ENCODE measurements at regions of chr9 and their contacts with region 1.

Region 1: DNA sequence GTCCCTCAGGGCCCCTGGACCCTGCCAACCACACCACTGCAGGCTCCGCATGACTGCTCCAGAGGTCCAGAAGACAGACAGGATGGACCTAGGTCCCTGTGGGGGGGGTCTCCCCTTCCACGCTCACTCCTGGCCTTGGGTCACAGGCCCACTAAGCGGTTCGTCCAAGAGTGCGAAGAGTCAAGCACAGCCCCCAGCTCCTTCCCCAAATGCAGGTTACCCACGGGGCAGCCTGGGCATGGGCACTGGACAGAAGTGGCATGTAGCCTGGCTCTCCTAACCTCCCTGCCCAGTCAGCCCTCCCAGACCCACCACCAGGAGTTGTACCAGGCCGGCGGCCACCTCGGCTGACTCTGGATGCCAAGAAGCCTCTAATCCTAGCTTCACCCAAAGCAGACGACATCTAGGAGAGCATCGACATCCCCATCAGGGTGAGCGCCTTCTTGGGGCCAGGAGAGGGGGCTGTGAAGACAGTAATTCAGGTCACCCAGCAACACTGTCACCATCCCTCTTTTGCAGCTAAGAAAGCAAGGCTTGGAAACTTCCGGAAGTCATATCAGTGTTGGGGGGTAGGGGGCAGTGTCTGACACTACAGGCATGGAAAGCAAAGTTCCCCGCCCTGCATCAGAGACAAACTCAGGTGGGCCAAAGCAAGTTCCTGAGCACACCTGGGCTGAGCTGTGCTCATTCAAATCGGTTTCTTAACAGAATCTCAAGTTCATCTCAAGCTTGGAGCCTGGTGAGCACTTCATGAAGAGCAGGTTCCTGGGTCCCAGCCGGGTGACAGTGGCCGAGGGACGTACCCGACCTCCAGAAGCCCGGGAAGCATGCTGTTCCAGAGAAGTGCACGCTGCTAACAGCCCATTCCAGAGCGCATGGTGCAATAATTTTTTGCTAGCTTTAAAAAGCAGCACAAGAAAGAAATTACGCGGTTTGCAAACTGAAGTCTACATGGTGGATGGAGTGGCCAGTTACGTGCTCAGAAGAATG is 68.7 kb downstream of the SEMA4D start:
- DNase-seq: peak; percentile 44 to 85 (median 60)
- ATAC-seq: peak; percentile 81
- H3K4me3 ChIP-seq: no peak overlapping the region
- H3K4me3 Mint-ChIP-seq: peak overlapping the region; percentile 63
- H3K27ac ChIP-seq: peak overlapping the region in 1 of 2 donors; percentile 67
- H3K27ac Mint-ChIP-seq: peak overlapping the region; percentile 96
- H3K4me1 ChIP-seq: peaks cover 100% of the 10 kb centered on the region
- H3K4me1 Mint-ChIP-seq: peaks cover 95% of the 10 kb centered on the region
- H3K27me3 ChIP-seq: no peaks in the 10 kb centered on the region
- H3K27me3 Mint-ChIP-seq: no peaks in the 10 kb centered on the region
- CTCF ChIP-seq: peak; percentile 58

Region 2: GRCh38 chr9:89418882-89419640 is 10.1 kb before region 1 on chr9:
- CTCF ChIA-PET with region 1: interaction called, 15 read pairs
- POLR2A ChIA-PET with region 1: interaction called, 8 read pairs
- intact Hi-C with region 1: no loop called
- DNase-seq: peak; percentile 51 to 89 (median 73)
- ATAC-seq: peak; percentile 66
- H3K4me3 ChIP-seq: peak overlapping the region; percentile 44
- H3K4me3 Mint-ChIP-seq: peak overlapping the region; percentile 89
- H3K27ac ChIP-seq: peak overlapping the region; percentile 58 to 86
- H3K27ac Mint-ChIP-seq: peak overlapping the region; percentile 96
- H3K4me1 ChIP-seq: peaks cover 92% of the 10 kb centered on the region
- H3K4me1 Mint-ChIP-seq: peaks cover 97% of the 10 kb centered on the region
- H3K27me3 ChIP-seq: no peaks in the 10 kb centered on the region
- H3K27me3 Mint-ChIP-seq: no peaks in the 10 kb centered on the region
- CTCF ChIP-seq: no peak

Region 3: GRCh38 chr9:89455356-89455824 is 26.2 kb after region 1 on chr9:
- CTCF ChIA-PET with region 1: interaction called, 29 read pairs
- POLR2A ChIA-PET with region 1: interaction called, 4 read pairs
- intact Hi-C with region 1: loop called in 1 of 2 experiments (anchors 5 kb)
- DNase-seq: peak in 8 of 14 experiments; percentile 47 to 81 (median 62)
- ATAC-seq: peak; percentile 65
- H3K4me3 ChIP-seq: peak overlapping the region; percentile 13
- H3K4me3 Mint-ChIP-seq: peak overlapping the region; percentile 71
- H3K27ac ChIP-seq: peak overlapping the region; percentile 68 to 79
- H3K27ac Mint-ChIP-seq: peak overlapping the region; percentile 96
- H3K4me1 ChIP-seq: peaks cover 86% of the 10 kb centered on the region
- H3K4me1 Mint-ChIP-seq: peaks cover 91% of the 10 kb centered on the region
- H3K27me3 ChIP-seq: no peaks in the 10 kb centered on the region
- H3K27me3 Mint-ChIP-seq: no peaks in the 10 kb centered on the region
- CTCF ChIP-seq: no peak

Region 4: GRCh38 chr9:89477811-89478630 is 48.8 kb after region 1 on chr9:
- CTCF ChIA-PET with region 1: interaction called, 9 read pairs
- POLR2A ChIA-PET with region 1: interaction called, 6 read pairs
- intact Hi-C with region 1: loop called in 1 of 2 experiments (anchors 1 kb)
- DNase-seq: peak in 10 of 14 experiments; percentile 41 to 79 (median 65)
- ATAC-seq: peak; percentile 55
- H3K4me3 ChIP-seq: peak overlapping the region; percentile 51
- H3K4me3 Mint-ChIP-seq: peak overlapping the region; percentile 85
- H3K27ac ChIP-seq: peak overlapping the region; percentile 54 to 73
- H3K27ac Mint-ChIP-seq: peak overlapping the region; percentile 97
- H3K4me1 ChIP-seq: peaks cover 96% of the 10 kb centered on the region
- H3K4me1 Mint-ChIP-seq: peaks cover 91% of the 10 kb centered on the region
- H3K27me3 ChIP-seq: no peaks in the 10 kb centered on the region
- H3K27me3 Mint-ChIP-seq: no peaks in the 10 kb centered on the region
- CTCF ChIP-seq: no peak

Region 5: GRCh38 chr9:89505911-89506310 is 76.7 kb after region 1 on chr9:
- CTCF ChIA-PET with region 1: interaction called, 17 read pairs
- POLR2A ChIA-PET with region 1: no interaction called
- intact Hi-C with region 1: no loop called
- DNase-seq: no peak
- ATAC-seq: no peak
- H3K4me3 ChIP-seq: no peak overlapping the region
- H3K4me3 Mint-ChIP-seq: no peak overlapping the region
- H3K27ac ChIP-seq: no peak overlapping the region
- H3K27ac Mint-ChIP-seq: no peak overlapping the region
- H3K4me1 ChIP-seq: peaks cover 54% of the 10 kb centered on the region
- H3K4me1 Mint-ChIP-seq: peaks cover 85% of the 10 kb centered on the region
- H3K27me3 ChIP-seq: no peaks in the 10 kb centered on the region
- H3K27me3 Mint-ChIP-seq: no peaks in the 10 kb centered on the region
- CTCF ChIP-seq: no peak

Region 6: GRCh38 chr9:89781838-89782517 is 352.8 kb after region 1 on chr9:
- CTCF ChIA-PET with region 1: no interaction called
- POLR2A ChIA-PET with region 1: no interaction called
- intact Hi-C with region 1: no loop called
- DNase-seq: peak in 3 of 14 experiments; percentile 3 to 43 (median 42)
- ATAC-seq: no peak
- H3K4me3 ChIP-seq: no peak overlapping the region
- H3K4me3 Mint-ChIP-seq: no peak overlapping the region
- H3K27ac ChIP-seq: no peak overlapping the region
- H3K27ac Mint-ChIP-seq: no peak overlapping the region
- H3K4me1 ChIP-seq: no peaks in the 10 kb centered on the region
- H3K4me1 Mint-ChIP-seq: no peaks in the 10 kb centered on the region
- H3K27me3 ChIP-seq: peaks cover 0 to 5% of the 10 kb centered on the region in 2 experiments
- H3K27me3 Mint-ChIP-seq: no peaks in the 10 kb centered on the region
- CTCF ChIP-seq: no peak

Measured in CD4-positive, alpha-beta T cell (primary cell).